ENCODE measurements at regions of chr3 and their contacts with region 1.

Region 1: GRCh38 chr3:27484015-27484844 is at the start of gene SLC4A7:
- DNase-seq: peak; percentile 96
- H3K4me3 ChIP-seq: peak within 1 kb of the TSS; percentile 79 to 93 (median 88)
- H3K27ac ChIP-seq: peak within 1 kb of the TSS; percentile 67
- H3K4me1 ChIP-seq: peaks cover 29% of the 10 kb centered on the region
- H3K27me3 ChIP-seq: no peaks in the 10 kb centered on the region
- CTCF ChIP-seq: no peak
- POLR2A ChIP-seq: peak; percentile 96
- total RNA-seq, gene SLC4A7: 50.9 and 58.6 TPM in 2 replicates

Region 2: GRCh38 chr3:27095553-27096222 is 388.5 kb before region 1 on chr3:
- CTCF ChIA-PET with region 1: no interaction called
- POLR2A ChIA-PET with region 1: no interaction called
- dilution Hi-C with region 1: no loop called
- intact Hi-C with region 1: no loop called
- DNase-seq: no peak
- H3K4me3 ChIP-seq: no peak overlapping the region
- H3K27ac ChIP-seq: no peak overlapping the region
- H3K4me1 ChIP-seq: no peaks in the 10 kb centered on the region
- H3K27me3 ChIP-seq: no peaks in the 10 kb centered on the region
- CTCF ChIP-seq: no peak
- POLR2A ChIP-seq: no peak

Region 3: DNA sequence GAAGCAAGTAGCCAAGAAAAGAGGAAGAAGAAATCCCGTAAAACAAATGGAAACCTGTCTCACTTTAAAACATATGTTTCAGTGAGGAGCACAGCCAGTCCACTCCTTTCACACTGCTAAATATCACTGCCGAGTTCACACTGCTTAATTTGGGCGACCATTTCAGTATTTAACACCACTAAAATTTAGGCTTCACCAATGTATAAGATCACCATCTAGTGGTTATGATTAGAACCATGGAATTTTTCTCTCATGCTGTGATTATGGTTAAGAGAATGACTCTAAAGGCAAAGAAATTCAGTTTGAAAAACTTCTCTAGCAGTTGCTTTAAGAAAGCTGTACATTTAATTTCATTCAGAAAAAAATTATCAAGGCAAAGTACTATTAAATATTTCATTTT is 16.7 kb before region 1 on chr3:
- CTCF ChIA-PET with region 1: interaction called, 6 read pairs
- POLR2A ChIA-PET with region 1: interaction called, 10 read pairs
- dilution Hi-C with region 1: no loop called
- intact Hi-C with region 1: no loop called
- DNase-seq: peak; percentile 70
- H3K4me3 ChIP-seq: no peak overlapping the region
- H3K27ac ChIP-seq: no peak overlapping the region
- H3K4me1 ChIP-seq: peaks cover 8% of the 10 kb centered on the region
- H3K27me3 ChIP-seq: no peaks in the 10 kb centered on the region
- CTCF ChIP-seq: peak; percentile 36 to 40
- POLR2A ChIP-seq: no peak

Region 4: DNA sequence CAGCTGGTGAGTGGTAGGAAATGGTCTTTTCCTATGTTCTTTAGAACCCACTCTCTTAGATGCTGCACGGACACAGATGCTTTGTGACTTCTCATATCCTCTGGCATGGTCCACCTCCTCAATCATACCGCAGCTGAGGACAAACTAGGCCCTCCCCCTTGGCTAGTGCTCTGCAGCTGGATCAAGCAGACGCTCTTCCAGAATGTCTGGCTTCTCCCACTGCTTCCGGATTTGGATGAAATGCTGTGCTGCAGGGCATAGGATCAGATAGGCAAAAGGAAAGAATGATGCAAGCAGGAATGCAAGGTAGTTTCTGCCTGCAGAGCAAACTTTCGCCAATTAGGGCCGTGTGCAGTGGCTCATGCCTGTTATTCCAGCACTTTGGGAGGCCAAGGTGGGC is 75.6 kb after region 1 on chr3:
- CTCF ChIA-PET with region 1: no interaction called
- POLR2A ChIA-PET with region 1: interaction called, 4 read pairs
- dilution Hi-C with region 1: no loop called
- intact Hi-C with region 1: loop called (anchors 1 kb)
- DNase-seq: peak; percentile 99
- H3K4me3 ChIP-seq: no peak overlapping the region
- H3K27ac ChIP-seq: peak overlapping the region; percentile 85
- H3K4me1 ChIP-seq: peaks cover 18% of the 10 kb centered on the region
- H3K27me3 ChIP-seq: no peaks in the 10 kb centered on the region
- CTCF ChIP-seq: no peak
- POLR2A ChIP-seq: peak; percentile 27

Region 5: DNA sequence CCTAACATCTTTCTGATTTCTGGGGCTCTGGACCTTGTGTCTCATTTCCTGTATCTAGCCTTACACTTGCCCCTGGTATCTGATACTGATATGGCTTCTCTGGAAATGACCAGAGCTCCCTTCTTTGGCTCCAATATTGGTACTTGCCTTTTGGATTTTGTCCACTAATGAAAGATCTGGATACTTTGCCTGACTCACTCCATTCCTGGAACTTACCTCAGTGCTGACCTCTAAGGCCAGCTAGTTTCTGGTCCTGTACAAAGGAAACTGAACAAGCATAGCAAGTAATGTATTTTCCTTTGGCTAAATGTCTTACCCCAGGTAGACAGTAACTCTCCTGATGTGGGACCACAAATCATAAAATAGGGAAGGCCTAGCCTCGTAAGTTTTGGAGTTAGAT is 93.8 kb after region 1 on chr3:
- CTCF ChIA-PET with region 1: no interaction called
- POLR2A ChIA-PET with region 1: interaction called, 11 read pairs
- dilution Hi-C with region 1: no loop called
- intact Hi-C with region 1: no loop called
- DNase-seq: peak; percentile 27
- H3K4me3 ChIP-seq: no peak overlapping the region
- H3K27ac ChIP-seq: no peak overlapping the region
- H3K4me1 ChIP-seq: peaks cover 7% of the 10 kb centered on the region
- H3K27me3 ChIP-seq: no peaks in the 10 kb centered on the region
- CTCF ChIP-seq: no peak
- POLR2A ChIP-seq: no peak

Region 6: GRCh38 chr3:27632431-27633223 is 148.4 kb after region 1 on chr3:
- CTCF ChIA-PET with region 1: no interaction called
- POLR2A ChIA-PET with region 1: no interaction called
- dilution Hi-C with region 1: no loop called
- intact Hi-C with region 1: loop called (anchors 1 kb)
- DNase-seq: peak; percentile 66
- H3K4me3 ChIP-seq: peak overlapping the region; percentile 32 to 59 (median 42)
- H3K27ac ChIP-seq: peak overlapping the region; percentile 80
- H3K4me1 ChIP-seq: peaks cover 34% of the 10 kb centered on the region
- H3K27me3 ChIP-seq: no peaks in the 10 kb centered on the region
- CTCF ChIP-seq: no peak
- POLR2A ChIP-seq: no peak

Region 7: DNA sequence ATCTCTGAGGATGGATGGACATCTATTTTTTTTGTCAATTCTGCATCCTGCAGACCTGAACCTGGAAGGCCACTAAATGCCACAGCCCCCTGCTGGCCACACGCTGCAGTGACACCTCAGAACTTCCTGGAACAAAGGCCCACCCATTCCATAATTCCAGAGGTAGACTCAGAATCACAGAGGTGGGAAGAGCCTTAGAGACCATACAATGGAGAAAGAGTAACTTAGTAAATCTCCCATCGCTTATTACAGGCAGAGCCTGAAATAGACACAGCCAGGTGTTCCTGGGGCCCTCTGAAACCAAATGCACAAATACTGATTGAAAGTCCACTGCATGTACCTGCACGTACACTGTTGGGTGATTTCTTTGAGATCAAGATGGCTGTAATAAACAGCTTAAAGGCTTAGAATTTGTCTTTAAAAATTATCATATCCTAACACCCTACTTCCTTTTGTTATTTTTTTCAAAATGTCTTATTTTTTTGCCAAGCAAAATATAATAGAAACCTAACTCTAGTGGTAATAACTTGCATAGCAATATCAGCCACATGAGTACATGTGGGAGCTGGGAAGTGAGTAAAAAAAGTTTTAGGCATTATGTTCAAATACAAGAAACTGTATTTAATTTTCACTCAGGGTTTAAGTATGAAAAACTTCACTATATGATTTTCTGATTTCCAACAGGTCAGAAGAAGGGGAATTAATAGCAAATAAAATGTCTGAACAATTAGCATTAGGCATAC is 175.2 kb after region 1 on chr3:
- CTCF ChIA-PET with region 1: interaction called, 3 read pairs
- POLR2A ChIA-PET with region 1: no interaction called
- dilution Hi-C with region 1: no loop called
- intact Hi-C with region 1: loop called (anchors 1 kb)
- DNase-seq: peak; percentile 55
- H3K4me3 ChIP-seq: no peak overlapping the region
- H3K27ac ChIP-seq: no peak overlapping the region
- H3K4me1 ChIP-seq: peaks cover 13% of the 10 kb centered on the region
- H3K27me3 ChIP-seq: no peaks in the 10 kb centered on the region
- CTCF ChIP-seq: peak; percentile 74 to 91
- POLR2A ChIP-seq: no peak

Measured in endothelial cell of umbilical vein (primary cell).